ENCODE measurements at regions of chr7 and their contacts with region 1.

Region 1: GRCh38 chr7:75914730-75915585 is at the start of gene POR:
- DNase-seq: peak; percentile 100
- ATAC-seq: peak; percentile 94
- H3K4me3 Mint-ChIP-seq: peak within 1 kb of the TSS; percentile 90
- H3K27ac Mint-ChIP-seq: peak within 1 kb of the TSS; percentile 94
- H3K4me1 Mint-ChIP-seq: peaks cover 33% of the 10 kb centered on the region
- H3K27me3 Mint-ChIP-seq: no peaks in the 10 kb centered on the region
- CTCF ChIP-seq: no peak
- total RNA-seq, gene POR: 63.5 and 66.8 TPM in 2 replicates

Region 2: DNA sequence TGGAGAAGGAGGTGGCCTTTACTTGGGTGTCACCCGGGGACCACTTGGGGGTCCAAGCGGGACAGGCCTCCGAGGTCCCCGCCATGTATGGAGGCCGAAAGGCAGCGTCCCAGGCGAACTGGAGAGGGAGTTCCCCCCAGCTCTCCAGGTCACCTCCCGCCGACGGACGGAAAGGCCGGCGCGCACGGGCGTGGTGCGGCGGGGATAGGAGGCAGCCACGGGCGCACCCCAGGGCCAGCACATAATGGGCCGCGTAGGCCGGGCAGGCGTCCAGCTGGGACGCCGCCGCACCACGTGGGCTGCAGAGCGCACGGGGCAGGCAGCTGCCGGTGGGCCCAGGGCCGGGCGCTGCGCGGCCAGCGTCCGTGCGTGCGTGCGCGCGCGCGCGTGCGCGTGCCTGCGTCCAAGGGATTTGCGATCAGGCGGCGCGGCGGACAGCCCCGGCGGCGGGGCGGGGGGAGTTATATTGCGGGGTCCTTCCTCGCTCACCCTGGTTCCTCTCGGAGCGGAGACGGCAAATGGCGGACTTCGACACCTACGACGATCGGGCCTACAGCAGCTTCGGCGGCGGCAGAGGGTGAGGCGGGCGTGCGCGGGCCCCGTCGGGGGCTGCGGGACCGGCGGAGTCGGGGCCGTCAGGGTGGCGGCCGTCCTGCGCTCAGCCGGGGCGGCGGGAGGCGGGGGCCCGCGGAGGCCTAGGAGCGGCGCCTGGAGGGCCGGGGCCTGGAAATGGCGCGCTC is 1740.9 kb before region 1 on chr7 and contains the start of gene EIF4H:
- CTCF ChIA-PET with region 1: no interaction called
- POLR2A ChIA-PET with region 1: no interaction called
- intact Hi-C with region 1: loop called (anchors 10 kb)
- DNase-seq: peak; percentile 99
- ATAC-seq: peak; percentile 80
- H3K4me3 Mint-ChIP-seq: peak within 1 kb of the TSS; percentile 91
- H3K27ac Mint-ChIP-seq: peak within 1 kb of the TSS; percentile 89
- H3K4me1 Mint-ChIP-seq: peaks cover 47% of the 10 kb centered on the region
- H3K27me3 Mint-ChIP-seq: no peaks in the 10 kb centered on the region
- CTCF ChIP-seq: no peak
- total RNA-seq, gene EIF4H: 263 and 280 TPM in 2 replicates

Region 3: GRCh38 chr7:75738987-75739795 is 175.8 kb before region 1 on chr7:
- CTCF ChIA-PET with region 1: no interaction called
- POLR2A ChIA-PET with region 1: no interaction called
- intact Hi-C with region 1: loop called (anchors 1 kb)
- DNase-seq: peak; percentile 97
- ATAC-seq: peak; percentile 91
- H3K4me3 Mint-ChIP-seq: peak overlapping the region; percentile 96
- H3K27ac Mint-ChIP-seq: peak overlapping the region; percentile 97
- H3K4me1 Mint-ChIP-seq: peaks cover 38% of the 10 kb centered on the region
- H3K27me3 Mint-ChIP-seq: no peaks in the 10 kb centered on the region
- CTCF ChIP-seq: no peak

Region 4: DNA sequence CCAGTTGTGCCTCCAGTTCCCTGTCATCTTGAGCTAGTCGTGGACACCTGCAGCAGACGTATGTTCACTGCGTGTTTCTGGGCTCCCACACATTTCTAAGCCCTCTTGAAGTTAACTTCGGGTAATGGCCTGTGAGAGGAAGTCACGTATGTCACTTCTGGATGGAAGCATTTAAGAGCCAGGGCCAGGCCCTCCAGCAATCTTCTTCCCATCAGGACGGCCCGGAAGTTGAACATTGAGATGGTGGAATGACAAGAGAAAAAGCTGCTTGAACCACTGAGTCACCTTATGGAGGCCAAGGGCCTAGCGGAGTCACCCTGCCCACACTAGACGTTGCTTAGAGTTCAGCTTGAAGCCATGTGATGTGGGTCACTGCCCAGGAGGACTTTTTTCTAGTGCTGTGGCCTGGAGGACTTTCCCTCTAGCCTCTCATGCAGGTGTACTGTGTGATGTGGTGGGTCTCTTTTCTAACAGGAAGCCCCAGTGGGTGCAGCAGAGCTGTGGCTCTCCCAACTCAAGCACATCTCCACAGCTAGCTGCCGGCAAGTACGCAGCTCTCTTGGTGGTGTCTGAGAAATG is 13.5 kb after region 1 on chr7:
- CTCF ChIA-PET with region 1: no interaction called
- POLR2A ChIA-PET with region 1: interaction called, 18 read pairs
- intact Hi-C with region 1: no loop called
- DNase-seq: no peak
- ATAC-seq: peak; percentile 84
- H3K4me3 Mint-ChIP-seq: no peak overlapping the region
- H3K27ac Mint-ChIP-seq: peak overlapping the region; percentile 46
- H3K4me1 Mint-ChIP-seq: peaks cover 15% of the 10 kb centered on the region
- H3K27me3 Mint-ChIP-seq: no peaks in the 10 kb centered on the region
- CTCF ChIP-seq: no peak

Region 5: DNA sequence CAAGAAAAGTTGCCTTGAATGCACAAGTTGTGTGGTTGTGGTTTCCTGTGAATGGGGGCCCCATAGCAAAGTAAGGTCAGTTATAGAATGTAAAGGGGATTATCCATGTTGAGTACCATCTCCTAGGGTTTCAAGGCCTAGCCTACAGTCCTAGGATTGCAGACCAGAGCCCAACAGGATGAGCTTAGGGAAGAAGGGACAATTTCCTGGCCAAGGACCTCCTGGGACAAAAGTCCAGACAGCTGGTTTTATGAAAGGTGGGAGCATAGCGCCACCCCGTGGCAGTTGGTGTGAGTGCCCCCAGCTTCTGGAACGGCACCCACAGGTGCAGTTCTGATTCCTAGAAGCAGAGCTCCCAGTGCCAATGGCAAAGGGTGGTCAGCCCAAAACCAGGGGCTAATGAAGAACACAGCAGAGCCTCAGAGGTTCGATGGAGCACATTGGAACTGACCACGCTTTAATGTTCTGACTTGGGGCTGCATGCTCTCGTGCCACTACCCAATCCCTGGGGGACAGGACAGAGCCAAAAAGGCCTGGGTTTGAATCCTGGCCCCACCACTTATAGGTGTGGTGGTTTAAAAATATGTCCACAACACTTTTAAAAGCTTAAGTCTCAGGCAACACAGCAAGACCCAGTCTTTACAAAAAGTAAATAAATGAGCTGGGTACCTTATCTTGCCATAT is 105.2 kb after region 1 on chr7:
- CTCF ChIA-PET with region 1: interaction called, 3 read pairs
- POLR2A ChIA-PET with region 1: interaction called, 11 read pairs
- intact Hi-C with region 1: no loop called
- DNase-seq: peak; percentile 52
- ATAC-seq: peak; percentile 64
- H3K4me3 Mint-ChIP-seq: no peak overlapping the region
- H3K27ac Mint-ChIP-seq: peak overlapping the region; percentile 24
- H3K4me1 Mint-ChIP-seq: peaks cover 16% of the 10 kb centered on the region
- H3K27me3 Mint-ChIP-seq: no peaks in the 10 kb centered on the region
- CTCF ChIP-seq: no peak

Region 6: DNA sequence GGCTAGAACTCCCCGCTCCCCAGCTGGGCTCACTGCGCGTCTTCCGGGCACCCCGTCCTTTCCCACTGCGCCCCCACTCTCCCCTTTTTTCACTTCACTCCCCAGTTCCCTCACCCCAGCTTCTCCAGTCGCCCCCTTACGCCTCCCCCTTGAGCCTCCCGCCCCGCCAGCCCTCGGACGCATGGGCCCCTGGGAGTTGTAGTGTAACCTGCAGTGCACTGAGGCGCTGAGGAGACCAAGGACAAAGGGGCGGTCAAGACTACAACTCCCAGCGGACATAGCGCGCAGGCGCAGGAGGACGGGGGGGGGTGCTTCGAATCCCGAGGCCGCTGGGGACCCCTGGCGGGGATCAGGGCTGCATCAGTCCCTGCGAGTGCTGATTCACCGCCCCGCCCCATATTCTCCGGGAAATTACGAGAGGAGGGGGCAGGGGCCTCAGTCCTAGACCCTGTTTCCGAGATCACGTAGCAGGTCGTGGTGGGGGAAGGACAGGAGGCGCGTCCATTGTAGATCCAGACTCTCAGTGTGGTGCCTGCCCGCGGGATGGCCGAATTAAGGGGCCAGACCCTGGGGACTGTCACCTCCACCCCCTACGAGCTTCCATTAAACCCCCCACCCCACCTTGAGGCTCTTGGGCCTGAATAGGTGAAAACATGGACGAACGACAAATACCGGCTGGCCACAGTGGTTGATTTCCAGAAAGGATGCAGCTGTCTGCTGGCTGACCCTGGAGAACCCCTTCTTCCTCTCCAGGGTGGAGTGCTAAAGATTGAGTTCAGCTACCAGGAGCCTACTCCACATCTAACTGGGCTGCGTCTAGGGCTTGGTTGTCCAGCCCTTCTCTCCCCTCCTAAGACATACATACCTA is 444.4 kb after region 1 on chr7:
- CTCF ChIA-PET with region 1: no interaction called
- POLR2A ChIA-PET with region 1: no interaction called
- intact Hi-C with region 1: loop called (anchors 10 kb)
- DNase-seq: peak; percentile 90
- ATAC-seq: peak; percentile 90
- H3K4me3 Mint-ChIP-seq: peak overlapping the region; percentile 92
- H3K27ac Mint-ChIP-seq: peak overlapping the region; percentile 98
- H3K4me1 Mint-ChIP-seq: peaks cover 39% of the 10 kb centered on the region
- H3K27me3 Mint-ChIP-seq: no peaks in the 10 kb centered on the region
- CTCF ChIP-seq: no peak

Measured in activated B cell treated with CpG ODN at 0.5 μM for 24 hours (primary cell).